ENCODE measurements at regions of chr13 and their contacts with region 1.

Region 1: GRCh38 chr13:103067751-103068555 is 1.7 kb upstream of the SLC10A2 start:
- DNase-seq: peak; percentile 20
- CTCF ChIP-seq: no peak

Region 2: DNA sequence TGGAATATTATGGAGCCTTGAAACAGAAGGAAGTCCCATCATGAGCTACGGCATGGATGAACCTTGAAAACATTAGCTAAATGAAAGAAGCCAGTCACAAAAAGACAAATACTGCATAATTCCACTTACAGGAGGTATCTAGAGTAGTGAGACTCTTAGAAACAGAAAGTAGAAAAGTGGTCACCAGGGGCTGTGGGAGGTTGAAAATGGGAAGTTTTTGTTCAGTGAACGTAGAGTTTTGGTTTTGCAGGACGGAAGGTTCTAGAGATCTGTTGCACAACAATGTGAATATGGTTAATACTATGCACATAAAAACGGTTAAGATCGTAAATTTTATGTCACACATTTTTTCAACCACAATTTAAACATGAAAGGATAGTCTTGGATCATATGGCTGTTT is 10.2 kb after region 1 on chr13:
- CTCF ChIA-PET with region 1: interaction called, 10 read pairs
- POLR2A ChIA-PET with region 1: no interaction called
- DNase-seq: no peak
- CTCF ChIP-seq: no peak

Measured in GM10248 (cell line).